ENCODE measurements at regions of chr15 and their contacts with region 1.

Region 1: GRCh38 chr15:42137431-42138261 is 18.8 kb downstream of the PLA2G4F start:
- DNase-seq: peak; percentile 13
- H3K4me3 Mint-ChIP-seq: no peak overlapping the region
- H3K27ac Mint-ChIP-seq: no peak overlapping the region
- H3K4me1 Mint-ChIP-seq: no peaks in the 10 kb centered on the region
- H3K27me3 Mint-ChIP-seq: peaks cover 28% of the 10 kb centered on the region
- CTCF ChIP-seq: no peak

Region 2: DNA sequence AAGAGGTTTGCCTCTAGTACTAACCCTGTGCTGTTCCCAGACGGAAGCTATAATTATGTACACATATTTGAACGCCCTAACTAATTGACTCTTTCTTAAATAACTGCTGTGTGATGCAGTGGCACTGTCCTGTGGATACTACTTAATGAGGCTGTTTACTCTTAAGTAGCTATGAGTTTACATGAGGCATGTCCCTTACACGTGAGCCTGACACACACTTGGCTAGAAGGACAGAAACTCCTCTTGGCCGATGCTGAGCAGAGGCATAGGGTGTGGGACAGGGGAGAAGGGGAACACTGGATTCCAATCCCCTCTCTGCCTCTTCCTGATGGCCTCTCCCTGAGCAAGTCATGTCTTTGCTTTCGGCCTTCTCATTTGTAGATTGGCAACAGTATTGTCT is 187.2 kb before region 1 on chr15:
- CTCF ChIA-PET with region 1: no interaction called
- intact Hi-C with region 1: no loop called
- DNase-seq: no peak
- H3K4me3 Mint-ChIP-seq: no peak overlapping the region
- H3K27ac Mint-ChIP-seq: no peak overlapping the region
- H3K4me1 Mint-ChIP-seq: peaks cover 1% of the 10 kb centered on the region
- H3K27me3 Mint-ChIP-seq: no peaks in the 10 kb centered on the region
- CTCF ChIP-seq: no peak

Region 3: DNA sequence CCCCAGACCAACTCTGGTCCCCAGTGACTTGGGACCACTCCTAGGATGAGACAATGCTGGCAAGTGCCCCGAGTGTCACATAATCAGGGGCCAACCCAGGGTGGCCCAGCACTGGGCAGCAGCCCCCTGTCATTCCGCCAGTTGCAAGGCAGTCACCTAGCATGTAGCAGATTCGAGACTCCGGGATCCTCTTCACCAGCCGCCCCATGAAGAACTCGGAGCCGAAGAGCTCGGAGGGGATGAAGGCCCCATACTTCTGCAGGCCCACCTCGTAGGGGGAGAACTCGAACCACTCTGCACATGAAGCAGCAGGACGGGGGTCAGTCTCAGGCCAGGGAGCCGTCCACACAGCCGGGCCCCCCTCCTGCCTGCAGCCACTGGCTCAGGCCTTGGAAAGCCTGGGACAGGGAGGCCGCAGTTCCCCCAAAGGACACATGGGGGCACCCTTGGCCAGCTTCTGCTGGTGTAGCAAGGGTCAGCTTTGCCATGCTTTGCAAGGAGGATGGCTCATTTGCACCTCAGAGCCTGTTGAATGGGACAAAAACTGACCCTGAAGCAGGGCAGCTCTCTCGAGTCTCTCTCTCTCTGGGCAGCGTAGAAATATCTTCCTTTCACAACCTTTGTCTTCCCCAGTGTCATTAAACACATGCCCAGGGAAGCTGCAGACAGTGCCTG is 148.2 kb before region 1 on chr15:
- CTCF ChIA-PET with region 1: no interaction called
- intact Hi-C with region 1: loop called (anchors 5 kb)
- DNase-seq: peak; percentile 88
- H3K4me3 Mint-ChIP-seq: no peak overlapping the region
- H3K27ac Mint-ChIP-seq: no peak overlapping the region
- H3K4me1 Mint-ChIP-seq: no peaks in the 10 kb centered on the region
- H3K27me3 Mint-ChIP-seq: no peaks in the 10 kb centered on the region
- CTCF ChIP-seq: peak; percentile 74

Region 4: GRCh38 chr15:42053914-42054313 is 83.7 kb before region 1 on chr15:
- CTCF ChIA-PET with region 1: no interaction called
- intact Hi-C with region 1: no loop called
- DNase-seq: no peak
- H3K4me3 Mint-ChIP-seq: no peak overlapping the region
- H3K27ac Mint-ChIP-seq: no peak overlapping the region
- H3K4me1 Mint-ChIP-seq: no peaks in the 10 kb centered on the region
- H3K27me3 Mint-ChIP-seq: no peaks in the 10 kb centered on the region
- CTCF ChIP-seq: no peak

Region 5: DNA sequence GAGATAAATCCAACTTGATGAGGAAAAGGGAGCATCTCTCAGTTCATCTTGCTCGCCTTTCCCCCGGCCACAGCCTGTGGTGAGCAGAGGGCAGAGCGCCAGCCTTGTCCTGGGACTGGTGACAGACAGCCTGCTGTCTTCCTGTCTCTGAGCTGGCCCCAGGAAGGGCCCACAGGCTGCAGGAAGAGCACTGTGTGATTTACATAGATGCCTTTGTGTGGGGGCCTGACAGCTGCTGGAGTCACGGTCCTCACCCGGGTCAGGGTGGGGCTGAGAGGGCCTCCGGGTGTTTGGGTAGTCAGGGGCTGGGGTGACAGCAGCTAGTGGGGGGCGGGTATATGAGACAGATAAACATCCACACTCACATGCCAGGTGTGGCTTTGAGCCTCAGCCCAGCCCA is 72.6 kb before region 1 on chr15:
- CTCF ChIA-PET with region 1: interaction called, 3 read pairs
- intact Hi-C with region 1: loop called (anchors 1 kb)
- DNase-seq: no peak
- H3K4me3 Mint-ChIP-seq: no peak overlapping the region
- H3K27ac Mint-ChIP-seq: no peak overlapping the region
- H3K4me1 Mint-ChIP-seq: peaks cover 9% of the 10 kb centered on the region
- H3K27me3 Mint-ChIP-seq: no peaks in the 10 kb centered on the region
- CTCF ChIP-seq: no peak

Region 6: GRCh38 chr15:42084460-42085235 is 53.0 kb before region 1 on chr15:
- CTCF ChIA-PET with region 1: no interaction called
- intact Hi-C with region 1: loop called (anchors 5 kb)
- DNase-seq: peak; percentile 68
- H3K4me3 Mint-ChIP-seq: peak overlapping the region; percentile 5
- H3K27ac Mint-ChIP-seq: no peak overlapping the region
- H3K4me1 Mint-ChIP-seq: peaks cover 16% of the 10 kb centered on the region
- H3K27me3 Mint-ChIP-seq: no peaks in the 10 kb centered on the region
- CTCF ChIP-seq: peak; percentile 44